WTC11 (cell line): ENCODE measurements at regions of chr7 and their contacts with region 1.

Region 1: DNA sequence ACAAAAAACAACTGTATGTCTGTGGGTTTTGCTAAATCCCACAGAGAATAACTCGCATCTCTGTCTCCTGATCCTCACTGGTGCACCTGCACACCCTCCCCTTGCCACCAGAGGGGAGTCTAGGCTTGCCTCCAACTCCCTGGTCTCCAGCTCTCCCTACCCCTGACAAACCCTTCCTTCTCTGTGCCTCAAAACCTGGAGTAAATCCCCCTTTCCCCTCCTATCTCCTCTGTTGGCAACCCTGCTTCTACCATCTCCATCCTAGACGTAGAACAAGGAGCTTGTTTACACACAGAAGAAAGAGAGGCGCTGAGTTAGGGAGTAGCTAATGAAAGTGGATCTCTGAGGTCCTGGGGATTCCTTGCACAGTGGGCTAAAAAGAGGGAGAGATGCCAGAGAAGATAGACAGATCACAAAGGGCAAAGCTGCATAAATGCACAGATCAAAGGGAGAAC is 6.0 kb downstream of the MBLAC1 start:
- DNase-seq: peak; percentile 74
- ATAC-seq: peak; percentile 82
- H3K4me3 Mint-ChIP-seq: no peak overlapping the region
- H3K27ac Mint-ChIP-seq: peak overlapping the region; percentile 61; the same call in 1 of the 2 replicates
- H3K4me1 Mint-ChIP-seq: peaks cover 7% of the 10 kb centered on the region
- H3K27me3 Mint-ChIP-seq: peaks cover 15% of the 10 kb centered on the region
- CTCF ChIP-seq: peak; percentile 80

Region 2: DNA sequence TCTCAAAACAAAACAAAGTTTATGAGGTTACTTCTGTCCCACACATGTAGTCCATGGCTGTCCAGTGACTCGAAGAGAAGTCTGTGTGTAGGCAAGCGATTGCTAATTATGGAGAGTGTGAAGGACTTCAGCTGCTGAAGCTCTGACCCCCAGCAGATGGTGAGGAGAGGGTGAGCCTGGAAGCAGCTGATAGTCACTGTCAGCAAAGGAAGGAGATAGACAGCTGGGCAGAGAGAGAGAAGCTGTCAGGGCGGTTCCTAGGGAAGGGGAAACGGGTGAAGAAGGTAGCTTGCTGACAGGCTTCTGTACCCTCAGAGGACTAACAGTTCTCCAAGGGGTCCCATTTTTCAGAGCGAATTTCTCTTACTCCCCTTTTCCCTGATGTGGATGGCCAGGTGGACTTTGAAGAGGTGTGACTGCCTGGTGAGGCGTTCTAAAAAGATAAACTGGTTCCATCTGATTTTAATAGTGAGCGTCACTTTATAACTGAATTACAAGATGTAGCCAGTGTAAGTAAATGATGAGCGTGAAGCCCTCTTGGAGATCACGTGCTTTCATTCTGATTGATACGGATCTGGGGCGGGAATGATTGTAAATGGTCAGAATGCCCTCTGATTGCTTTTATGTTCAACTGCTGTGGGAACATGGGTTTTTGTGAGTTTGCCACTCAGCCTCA is 71.1 kb before region 1 on chr7:
- CTCF ChIA-PET with region 1: no interaction called
- POLR2A ChIA-PET with region 1: no interaction called
- DNase-seq: no peak
- ATAC-seq: no peak
- H3K4me3 Mint-ChIP-seq: no peak overlapping the region
- H3K27ac Mint-ChIP-seq: no peak overlapping the region
- H3K4me1 Mint-ChIP-seq: no peaks in the 10 kb centered on the region
- H3K27me3 Mint-ChIP-seq: no peaks in the 10 kb centered on the region
- CTCF ChIP-seq: no peak

Region 3: GRCh38 chr7:100081535-100082102 is 51.1 kb before region 1 on chr7 and contains the start of gene ZNF3:
- CTCF ChIA-PET with region 1: interaction called, 10 read pairs
- POLR2A ChIA-PET with region 1: interaction called, 4 read pairs
- DNase-seq: peak; percentile 98
- ATAC-seq: peak; percentile 86
- H3K4me3 Mint-ChIP-seq: peak within 1 kb of the TSS; percentile 98
- H3K27ac Mint-ChIP-seq: peak within 1 kb of the TSS; percentile 95
- H3K4me1 Mint-ChIP-seq: peaks cover 23% of the 10 kb centered on the region
- H3K27me3 Mint-ChIP-seq: no peaks in the 10 kb centered on the region; the same call in 1 of the 2 replicates
- CTCF ChIP-seq: peak; percentile 86
- total RNA-seq, gene ZNF3: 38.1 to 48.3 TPM (median 39.1 TPM) in 3 replicates

Region 4: DNA sequence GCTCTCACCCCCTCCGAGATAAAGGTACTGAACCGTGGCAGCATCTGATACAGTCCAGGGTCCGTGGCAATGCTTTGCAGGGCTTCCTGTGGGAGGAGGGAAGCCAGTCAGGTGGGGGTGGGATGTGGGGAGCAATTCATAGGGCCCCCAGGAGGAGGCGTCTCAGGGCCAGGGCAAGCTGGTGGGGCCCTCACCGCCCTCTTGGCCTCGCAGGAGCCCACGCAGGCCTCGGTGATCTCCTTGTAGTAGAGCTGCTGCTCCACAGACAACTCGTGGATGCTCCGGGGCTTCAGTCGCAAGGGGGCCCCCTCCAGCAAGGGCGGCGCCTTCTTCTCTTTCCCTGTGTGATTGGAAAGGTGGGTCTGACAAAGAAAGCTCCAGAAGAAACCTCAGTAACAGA is 20.8 kb before region 1 on chr7:
- CTCF ChIA-PET with region 1: interaction called, 13 read pairs
- POLR2A ChIA-PET with region 1: no interaction called
- DNase-seq: no peak
- ATAC-seq: no peak
- H3K4me3 Mint-ChIP-seq: no peak overlapping the region
- H3K27ac Mint-ChIP-seq: no peak overlapping the region
- H3K4me1 Mint-ChIP-seq: no peaks in the 10 kb centered on the region
- H3K27me3 Mint-ChIP-seq: no peaks in the 10 kb centered on the region
- CTCF ChIP-seq: no peak

Region 5: GRCh38 chr7:100171087-100171681 is 38.5 kb after region 1 on chr7:
- CTCF ChIA-PET with region 1: interaction called, 54 read pairs
- POLR2A ChIA-PET with region 1: interaction called, 4 read pairs
- DNase-seq: peak; percentile 80
- ATAC-seq: peak; percentile 50
- H3K4me3 Mint-ChIP-seq: peak overlapping the region; percentile 61
- H3K27ac Mint-ChIP-seq: no peak overlapping the region
- H3K4me1 Mint-ChIP-seq: peaks cover 61% of the 10 kb centered on the region
- H3K27me3 Mint-ChIP-seq: peaks cover 27% of the 10 kb centered on the region
- CTCF ChIP-seq: no peak

Region 6: DNA sequence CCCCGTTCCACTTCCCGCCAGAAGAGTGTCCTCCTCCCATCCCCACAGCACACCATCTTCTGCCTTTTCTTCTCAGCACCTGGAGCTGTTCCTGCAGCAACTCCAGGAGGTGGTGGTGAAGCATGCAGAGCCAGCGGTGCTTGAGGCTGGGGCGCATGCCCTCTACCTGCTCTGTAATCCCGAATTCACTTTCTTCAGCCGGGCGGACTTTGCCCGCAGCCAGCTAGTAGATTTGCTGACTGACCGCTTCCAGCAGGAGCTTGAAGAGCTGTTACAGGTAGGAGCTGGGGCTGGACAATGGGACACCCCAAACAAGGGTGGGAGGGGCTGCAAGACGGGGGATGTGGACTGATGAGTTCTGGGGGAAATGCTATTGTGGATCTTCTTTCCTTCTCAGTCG is 68.0 kb after region 1 on chr7:
- CTCF ChIA-PET with region 1: interaction called, 10 read pairs
- POLR2A ChIA-PET with region 1: no interaction called
- DNase-seq: no peak
- ATAC-seq: no peak
- H3K4me3 Mint-ChIP-seq: no peak overlapping the region
- H3K27ac Mint-ChIP-seq: no peak overlapping the region
- H3K4me1 Mint-ChIP-seq: peaks cover 14% of the 10 kb centered on the region
- H3K27me3 Mint-ChIP-seq: peaks cover 52% of the 10 kb centered on the region
- CTCF ChIP-seq: no peak